IMR-90 (cell line): ENCODE measurements at regions of chr17 and their contacts with region 1.

Region 1: GRCh38 chr17:50213026-50214022 is 11.9 kb upstream of the COL1A1 start:
- DNase-seq: peak; percentile 51
- ATAC-seq: no peak
- H3K4me3 ChIP-seq: no peak overlapping the region
- H3K27ac ChIP-seq: peak overlapping the region; percentile 17; the same call in 1 of the 2 replicates
- H3K4me1 ChIP-seq: peaks cover 55% of the 10 kb centered on the region
- H3K27me3 ChIP-seq: no peaks in the 10 kb centered on the region
- CTCF ChIP-seq: peak; percentile 27; the same call in 1 of the 2 replicates
- POLR2A ChIP-seq: no peak
- RAD21 ChIP-seq: peak; percentile 41; the same call in 1 of the 2 replicates

Region 2: GRCh38 chr17:50184611-50185398 is 28.5 kb before region 1 on chr17:
- CTCF ChIA-PET with region 1: interaction called, 5 read pairs
- POLR2A ChIA-PET with region 1: interaction called, 10 read pairs
- dilution Hi-C with region 1: no loop called
- in situ Hi-C with region 1: no loop called
- intact Hi-C with region 1: no loop called
- DNase-seq: peak; percentile 62
- ATAC-seq: no peak
- H3K4me3 ChIP-seq: no peak overlapping the region
- H3K27ac ChIP-seq: peak overlapping the region; percentile 99
- H3K4me1 ChIP-seq: no peaks in the 10 kb centered on the region; the same call in 1 of the 2 replicates
- H3K27me3 ChIP-seq: no peaks in the 10 kb centered on the region
- CTCF ChIP-seq: no peak
- POLR2A ChIP-seq: peak; percentile 11; the same call in 1 of the 2 replicates
- RAD21 ChIP-seq: no peak

Region 3: DNA sequence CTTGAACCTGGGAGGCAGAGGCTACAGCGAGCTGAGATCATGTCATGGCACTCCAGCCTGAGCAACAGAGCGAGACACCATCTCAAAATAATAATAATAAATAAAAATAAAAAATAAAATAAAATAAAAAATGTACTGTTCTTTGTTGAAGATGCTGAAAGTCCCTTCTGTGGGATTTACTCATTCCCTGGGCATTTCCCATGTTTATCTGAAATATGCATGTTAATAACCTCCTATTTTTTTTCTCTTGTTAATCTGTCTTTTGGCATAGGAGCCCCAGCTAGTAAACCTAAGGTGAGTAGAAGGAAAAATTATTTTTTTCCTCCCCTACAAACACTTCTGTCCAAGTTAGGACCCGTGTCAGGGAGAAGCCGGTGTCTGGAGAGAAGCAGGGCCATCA is 95.3 kb after region 1 on chr17:
- CTCF ChIA-PET with region 1: no interaction called
- POLR2A ChIA-PET with region 1: no interaction called
- dilution Hi-C with region 1: no loop called
- in situ Hi-C with region 1: no loop called
- intact Hi-C with region 1: no loop called
- DNase-seq: peak; percentile 74
- ATAC-seq: peak; percentile 15; the same call in 1 of the 2 replicates
- H3K4me3 ChIP-seq: no peak overlapping the region
- H3K27ac ChIP-seq: peak overlapping the region; percentile 62
- H3K4me1 ChIP-seq: peaks cover 24% of the 10 kb centered on the region
- H3K27me3 ChIP-seq: peaks cover 4% of the 10 kb centered on the region; the same call in 1 of the 2 replicates
- CTCF ChIP-seq: no peak
- POLR2A ChIP-seq: no peak
- RAD21 ChIP-seq: no peak

Region 4: DNA sequence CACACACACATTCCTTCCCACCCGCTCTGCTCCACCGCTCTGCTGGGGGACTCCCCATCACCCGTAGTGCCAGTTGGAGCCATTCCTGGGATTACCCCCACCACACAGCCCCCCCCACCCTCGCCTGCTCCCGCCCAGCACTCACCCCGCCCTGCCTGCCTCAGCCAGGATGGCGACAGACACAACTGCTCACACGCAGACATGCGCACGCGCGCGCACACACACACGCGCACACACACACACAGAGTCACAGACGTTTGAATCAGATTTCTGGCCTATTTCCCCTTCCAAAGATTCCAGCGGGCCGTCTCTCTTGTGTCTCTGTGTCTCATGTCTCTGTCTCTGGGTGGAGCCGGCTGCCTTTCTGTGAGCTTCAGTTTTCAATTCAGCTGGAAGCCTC is 351.6 kb after region 1 on chr17:
- CTCF ChIA-PET with region 1: no interaction called
- POLR2A ChIA-PET with region 1: no interaction called
- dilution Hi-C with region 1: no loop called
- in situ Hi-C with region 1: no loop called
- intact Hi-C with region 1: no loop called
- DNase-seq: peak; percentile 56
- ATAC-seq: peak; percentile 31
- H3K4me3 ChIP-seq: no peak overlapping the region
- H3K27ac ChIP-seq: no peak overlapping the region
- H3K4me1 ChIP-seq: peaks cover 7% of the 10 kb centered on the region; the same call in 1 of the 2 replicates
- H3K27me3 ChIP-seq: peaks cover 83% of the 10 kb centered on the region
- CTCF ChIP-seq: no peak
- POLR2A ChIP-seq: no peak
- RAD21 ChIP-seq: no peak

Region 5: DNA sequence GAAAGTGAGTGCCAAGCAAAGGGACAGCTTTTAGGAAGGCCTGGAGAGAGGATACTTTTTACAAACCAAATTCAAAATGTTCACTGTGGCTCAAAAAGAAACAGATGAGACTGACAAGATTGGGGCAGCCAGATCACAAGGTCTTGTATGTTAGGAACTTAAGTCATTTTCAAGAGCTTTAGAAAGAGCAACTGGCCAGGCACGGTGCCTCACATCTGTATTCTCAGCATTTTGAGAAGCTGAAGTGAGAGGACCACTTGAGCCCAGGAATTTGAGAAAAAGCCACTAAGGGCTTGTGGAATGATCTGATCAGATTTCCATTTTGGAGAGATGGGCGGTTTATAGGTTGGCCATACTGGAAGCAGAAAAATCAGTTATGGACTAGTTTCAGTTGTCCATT is 890.1 kb after region 1 on chr17:
- CTCF ChIA-PET with region 1: no interaction called
- POLR2A ChIA-PET with region 1: no interaction called
- dilution Hi-C with region 1: no loop called
- in situ Hi-C with region 1: no loop called
- intact Hi-C with region 1: no loop called
- DNase-seq: no peak
- ATAC-seq: no peak
- H3K4me3 ChIP-seq: no peak overlapping the region
- H3K27ac ChIP-seq: no peak overlapping the region
- H3K4me1 ChIP-seq: peaks cover 6% of the 10 kb centered on the region; the same call in 1 of the 2 replicates
- H3K27me3 ChIP-seq: no peaks in the 10 kb centered on the region
- CTCF ChIP-seq: no peak
- POLR2A ChIP-seq: no peak
- RAD21 ChIP-seq: no peak